Sigmoid colon (tissue), 7 donors: ENCODE measurements at regions of chr21 and their contacts with region 1.

Region 1: DNA sequence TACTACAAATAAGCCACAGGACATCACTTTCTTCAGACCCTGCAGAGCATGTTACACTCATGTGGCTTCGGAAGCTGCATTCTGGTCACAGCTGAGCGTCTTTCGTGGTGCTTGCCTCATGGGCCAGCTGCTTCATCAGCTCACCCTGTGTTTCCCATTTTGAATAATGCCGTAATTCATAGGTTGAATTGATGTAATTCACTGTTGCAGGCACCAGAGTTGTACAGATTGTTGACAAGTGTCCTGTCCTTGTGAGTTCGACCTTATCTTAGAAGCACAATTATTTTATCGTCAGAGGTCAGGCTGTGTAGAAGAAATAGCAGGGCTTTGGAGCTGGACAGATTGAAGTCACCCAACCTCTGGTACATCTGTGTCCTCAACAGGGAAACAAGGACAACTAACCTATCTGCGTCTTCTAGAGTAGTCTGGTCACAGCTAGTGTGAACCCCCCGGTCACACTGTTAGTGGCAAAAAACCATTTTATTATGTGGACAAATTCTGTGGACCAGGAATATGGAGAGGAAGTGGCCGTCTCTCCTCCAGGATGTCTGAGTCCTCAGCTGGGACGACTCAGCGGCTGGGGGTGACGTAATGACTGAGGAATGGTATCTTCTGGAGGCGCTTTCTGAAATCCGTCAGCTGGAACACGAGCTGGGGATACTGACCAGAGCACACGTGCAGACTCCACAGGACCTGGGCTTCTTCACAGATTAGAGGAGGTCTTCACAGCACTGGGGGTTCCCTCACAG is 17.8 kb downstream of the PKNOX1 start:
- DNase-seq: peak; percentile 96
- H3K4me3 ChIP-seq: no peak overlapping the region
- H3K27ac ChIP-seq: peak overlapping the region; percentile 58 to 90 (median 78)
- H3K4me1 ChIP-seq: peaks cover 0 to 28% (median 26%) of the 10 kb centered on the region in 4 donors
- H3K27me3 ChIP-seq: no peaks in the 10 kb centered on the region
- CTCF ChIP-seq: peak in 1 of 4 experiments; percentile 13
- EP300 ChIP-seq: peak in 3 of 4 donors; percentile 14 to 79 (median 61)
- POLR2A ChIP-seq: no peak

Region 2: GRCh38 chr21:42892931-42893755 is 99.0 kb before region 1 on chr21 and contains the start of gene NDUFV3:
- intact Hi-C with region 1: loop called (anchors 10 kb)
- DNase-seq: peak; percentile 100
- H3K4me3 ChIP-seq: peak within 1 kb of the TSS; percentile 78 to 98 (median 85)
- H3K27ac ChIP-seq: peak within 1 kb of the TSS; percentile 96 to 99 (median 97)
- H3K4me1 ChIP-seq: peaks cover 0 to 21% (median 10%) of the 10 kb centered on the region in 4 donors
- H3K27me3 ChIP-seq: no peaks in the 10 kb centered on the region
- CTCF ChIP-seq: no peak
- EP300 ChIP-seq: no peak
- POLR2A ChIP-seq: peak; percentile 76 to 91
- total RNA-seq, gene NDUFV3: 53.5 to 67.6 (median 60.7) TPM